ENCODE measurements at regions of chr1 and their contacts with region 1.

Region 1: DNA sequence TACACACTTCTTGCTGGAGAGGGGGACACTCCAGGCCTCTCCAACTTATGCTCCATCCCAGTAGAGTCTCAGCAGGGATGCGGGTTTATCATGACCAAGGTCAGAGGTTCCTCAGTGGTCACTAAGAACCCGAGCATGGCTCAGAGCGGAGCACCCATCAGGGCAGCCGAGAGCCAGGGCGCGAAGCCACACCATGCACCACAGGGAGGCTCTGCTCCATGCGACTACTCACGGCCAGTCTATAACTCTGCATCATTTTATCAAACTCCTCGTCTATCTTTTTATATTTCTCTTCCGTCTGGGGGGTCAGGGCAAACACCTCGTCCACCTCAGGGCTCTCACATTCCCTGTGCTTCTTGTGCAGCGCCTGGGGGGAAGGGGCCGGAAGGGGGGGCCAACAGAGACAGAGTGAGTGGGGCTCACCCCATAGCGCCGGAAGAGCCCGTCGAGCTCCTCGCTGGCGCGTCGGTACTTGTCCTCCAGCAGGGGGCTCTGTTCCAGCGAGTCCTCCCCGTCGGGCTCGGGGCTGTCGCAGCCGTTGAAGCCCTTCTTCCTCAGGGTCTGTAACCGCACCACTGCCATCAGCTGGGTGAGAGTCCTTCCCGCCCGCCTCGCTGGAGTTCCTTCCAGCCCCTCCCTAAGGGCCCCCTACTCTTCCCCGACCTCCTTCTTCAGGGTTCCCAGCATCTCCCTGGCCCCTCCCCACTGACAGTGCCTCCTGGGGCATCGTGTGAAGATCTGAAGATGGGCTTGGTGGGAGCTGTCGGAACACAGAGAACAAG is 20.0 kb downstream of the MEF2D start:
- DNase-seq: peak; percentile 88
- ATAC-seq: peak; percentile 89
- H3K4me3 Mint-ChIP-seq: peak overlapping the region; percentile 42
- H3K27ac Mint-ChIP-seq: peak overlapping the region; percentile 72
- H3K4me1 Mint-ChIP-seq: peaks cover 71% of the 10 kb centered on the region
- H3K27me3 Mint-ChIP-seq: no peaks in the 10 kb centered on the region

Region 2: GRCh38 chr1:156379420-156380165 is 101.0 kb before region 1 on chr1:
- CTCF ChIA-PET with region 1: no interaction called
- DNase-seq: no peak
- ATAC-seq: no peak
- H3K4me3 Mint-ChIP-seq: no peak overlapping the region
- H3K27ac Mint-ChIP-seq: no peak overlapping the region
- H3K4me1 Mint-ChIP-seq: peaks cover 2% of the 10 kb centered on the region
- H3K27me3 Mint-ChIP-seq: peaks cover 15% of the 10 kb centered on the region

Region 3: DNA sequence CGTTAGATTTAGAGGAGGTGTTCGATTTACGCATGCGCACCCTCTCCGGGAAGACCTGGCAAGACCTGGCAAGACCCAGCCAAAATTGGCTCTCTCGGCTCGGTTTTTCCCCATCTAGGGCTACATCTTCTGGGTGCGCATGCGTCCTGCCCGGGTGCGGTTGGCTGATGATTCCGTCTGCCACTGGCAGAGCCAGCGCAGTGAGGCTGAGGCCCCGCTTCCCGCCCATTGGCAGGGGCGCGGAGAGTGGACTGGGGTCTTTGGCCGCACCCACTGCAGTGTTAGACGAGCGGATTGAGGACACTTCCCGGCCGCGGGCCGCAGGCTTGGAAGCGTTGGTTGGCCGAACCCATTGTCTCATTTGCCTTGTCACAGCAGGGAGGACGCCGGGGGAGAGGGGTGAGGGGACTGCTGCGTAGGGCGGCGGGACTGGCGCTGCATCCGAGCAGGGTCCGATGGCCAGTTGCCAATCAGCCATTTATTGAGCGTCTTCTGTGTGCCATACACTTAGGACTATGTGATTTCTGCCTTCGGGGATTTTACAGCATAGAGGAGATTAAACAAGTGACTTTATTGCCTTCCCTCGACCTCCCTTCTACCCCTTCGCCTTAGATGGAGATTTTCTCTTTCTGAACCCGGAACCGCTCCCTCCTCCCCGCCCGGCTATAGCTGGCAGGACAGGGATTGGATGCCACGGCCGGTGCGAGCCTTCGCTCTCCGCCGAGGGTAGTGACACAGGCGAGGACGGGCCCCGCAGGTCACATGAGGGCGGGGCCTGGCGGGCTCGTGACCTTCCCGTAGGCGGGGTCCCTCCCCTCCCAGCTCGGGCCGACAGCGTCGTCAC is 23.8 kb before region 1 on chr1:
- CTCF ChIA-PET with region 1: interaction called, 18 read pairs
- DNase-seq: peak; percentile 97
- ATAC-seq: peak; percentile 92
- H3K4me3 Mint-ChIP-seq: peak overlapping the region; percentile 86
- H3K27ac Mint-ChIP-seq: peak overlapping the region; percentile 95
- H3K4me1 Mint-ChIP-seq: peaks cover 31% of the 10 kb centered on the region
- H3K27me3 Mint-ChIP-seq: peaks cover 7% of the 10 kb centered on the region

Region 4: DNA sequence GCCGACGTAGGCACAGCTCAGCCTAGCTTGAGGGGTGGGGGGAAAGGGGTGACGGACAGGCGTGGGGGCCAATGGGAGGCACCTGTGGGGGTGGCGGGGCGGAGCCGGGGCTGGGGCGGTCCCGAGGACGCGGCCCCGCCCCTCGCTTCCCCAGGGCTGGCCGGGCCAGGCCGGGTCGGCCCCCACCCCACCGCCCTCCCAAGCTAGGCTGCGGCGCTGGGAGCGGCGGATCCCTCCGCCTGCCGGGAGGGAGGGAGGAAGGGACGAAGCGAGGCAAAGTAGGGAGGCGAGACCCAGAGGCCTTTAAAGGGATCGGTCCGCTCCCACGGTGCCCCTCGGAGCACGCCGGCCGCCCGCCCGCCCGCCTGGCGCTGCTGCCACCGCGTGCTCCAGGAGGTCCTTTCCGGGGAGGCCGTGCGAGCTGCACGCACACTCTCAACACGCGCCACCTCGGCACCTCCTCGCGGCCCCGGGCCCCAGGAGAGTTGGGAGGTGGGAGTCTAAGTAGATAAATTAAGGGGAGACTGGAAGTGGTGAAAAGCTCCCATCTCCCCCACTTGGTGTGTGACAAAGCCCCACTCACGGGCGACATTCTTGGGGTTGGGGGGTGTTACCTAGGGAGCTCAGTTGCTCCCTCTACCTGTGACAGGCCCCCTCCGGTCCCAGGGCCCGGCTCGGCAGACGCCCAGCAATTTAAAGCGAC is 20.3 kb after region 1 on chr1:
- CTCF ChIA-PET with region 1: interaction called, 372 read pairs
- DNase-seq: peak; percentile 95
- ATAC-seq: peak; percentile 72
- H3K4me3 Mint-ChIP-seq: peak overlapping the region; percentile 88
- H3K27ac Mint-ChIP-seq: peak overlapping the region; percentile 97
- H3K4me1 Mint-ChIP-seq: peaks cover 74% of the 10 kb centered on the region
- H3K27me3 Mint-ChIP-seq: no peaks in the 10 kb centered on the region

Region 5: DNA sequence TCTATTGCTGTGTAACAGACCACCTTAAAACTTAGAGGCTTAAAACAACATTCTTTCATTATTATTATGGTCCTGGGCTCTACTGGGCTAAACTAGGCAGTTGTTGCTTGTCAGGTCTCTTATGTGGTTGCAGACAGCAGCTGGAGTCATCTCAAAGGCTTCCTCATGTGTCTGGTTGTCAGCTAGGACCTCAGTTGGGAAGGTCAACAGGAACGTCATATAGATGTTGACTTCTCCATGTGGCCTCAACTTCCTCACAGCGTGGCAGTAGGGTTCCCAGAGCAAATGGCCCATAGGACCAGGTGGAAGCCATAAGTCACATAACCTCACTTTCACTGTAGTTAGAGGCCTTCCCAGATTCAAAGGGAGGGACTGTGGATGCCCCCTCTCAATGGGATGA is 35.4 kb after region 1 on chr1:
- CTCF ChIA-PET with region 1: interaction called, 13 read pairs
- DNase-seq: no peak
- ATAC-seq: no peak
- H3K4me3 Mint-ChIP-seq: no peak overlapping the region
- H3K27ac Mint-ChIP-seq: no peak overlapping the region
- H3K4me1 Mint-ChIP-seq: peaks cover 17% of the 10 kb centered on the region
- H3K27me3 Mint-ChIP-seq: no peaks in the 10 kb centered on the region

Region 6: DNA sequence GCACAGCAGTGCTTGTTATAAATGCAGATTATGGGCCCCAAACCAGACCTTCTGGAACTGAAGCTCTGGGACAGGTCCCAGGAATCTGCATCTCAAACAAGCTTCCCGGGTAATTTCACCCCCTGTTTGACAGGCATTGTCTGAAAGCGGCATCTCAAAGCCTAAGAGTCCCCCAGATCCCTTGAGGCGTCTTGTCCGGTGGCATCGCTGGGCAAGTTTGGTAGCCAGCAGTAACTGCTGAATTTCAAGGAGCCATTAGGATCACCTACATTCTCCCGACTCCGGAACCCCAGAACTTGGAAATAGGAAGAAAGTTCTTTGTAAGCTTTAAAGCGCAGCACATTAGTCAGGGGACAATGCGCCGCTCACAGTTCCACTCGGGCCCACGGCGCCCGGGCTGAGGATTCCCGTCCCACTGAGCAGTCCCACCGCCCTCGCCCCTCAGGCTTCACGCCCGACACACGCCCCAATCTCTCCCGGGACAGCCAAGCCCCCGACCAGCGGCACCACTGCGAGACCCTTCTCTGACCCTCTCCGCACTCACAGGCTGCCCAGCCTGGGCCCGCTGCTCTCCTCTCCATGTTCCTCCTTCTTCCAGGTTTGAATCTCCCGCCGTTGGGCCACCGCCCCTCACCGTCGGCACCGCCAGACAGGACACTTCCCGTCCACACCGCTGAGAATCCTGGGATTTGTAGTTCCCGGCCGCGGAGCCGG is 91.5 kb after region 1 on chr1 and contains the start of gene IQGAP3:
- CTCF ChIA-PET with region 1: interaction called, 18 read pairs
- DNase-seq: peak; percentile 86
- ATAC-seq: peak; percentile 95
- H3K4me3 Mint-ChIP-seq: peak within 1 kb of the TSS; percentile 91
- H3K27ac Mint-ChIP-seq: peak within 1 kb of the TSS; percentile 58
- H3K4me1 Mint-ChIP-seq: peaks cover 26% of the 10 kb centered on the region
- H3K27me3 Mint-ChIP-seq: peaks cover 28% of the 10 kb centered on the region
- total RNA-seq, gene IQGAP3: 24.3 to 31.3 TPM

Region 7: DNA sequence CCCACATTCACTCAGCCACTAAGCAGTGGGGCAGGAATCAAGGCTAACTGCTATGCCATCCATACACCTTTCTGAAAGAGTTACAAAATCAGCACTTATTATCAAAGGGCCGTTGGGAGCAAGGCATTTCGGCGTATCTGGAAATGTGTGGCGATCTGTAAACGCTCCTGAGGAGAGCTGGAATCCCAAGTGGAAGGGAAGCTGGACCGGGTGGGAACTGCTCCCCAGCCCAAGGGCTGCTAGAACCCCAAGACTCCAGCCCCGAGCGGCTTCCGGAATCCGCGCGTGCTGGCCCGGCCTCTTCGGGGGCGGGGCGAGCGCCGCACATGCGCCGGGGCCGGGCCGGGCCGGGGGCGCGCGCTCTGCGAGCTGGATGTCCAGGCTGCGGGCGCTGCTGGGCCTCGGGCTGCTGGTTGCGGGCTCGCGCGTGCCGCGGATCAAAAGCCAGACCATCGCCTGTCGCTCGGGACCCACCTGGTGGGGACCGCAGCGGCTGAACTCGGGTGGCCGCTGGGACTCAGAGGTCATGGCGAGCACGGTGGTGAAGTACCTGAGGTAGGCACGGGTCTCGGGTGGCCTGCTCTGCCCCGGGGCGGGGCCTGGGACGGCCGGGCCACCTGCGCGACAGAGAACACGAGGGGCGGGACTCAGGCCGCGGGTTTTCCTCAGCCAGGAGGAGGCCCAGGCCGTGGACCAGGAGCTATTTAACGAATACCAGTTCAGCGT is 111.0 kb after region 1 on chr1 and contains the start of gene NAXE:
- CTCF ChIA-PET with region 1: interaction called, 17 read pairs
- DNase-seq: peak; percentile 77
- ATAC-seq: peak; percentile 98
- H3K4me3 Mint-ChIP-seq: peak within 1 kb of the TSS; percentile 83
- H3K27ac Mint-ChIP-seq: peak within 1 kb of the TSS; percentile 88
- H3K4me1 Mint-ChIP-seq: peaks cover 28% of the 10 kb centered on the region
- H3K27me3 Mint-ChIP-seq: no peaks in the 10 kb centered on the region
- total RNA-seq, gene NAXE: 62.7 to 66.6 TPM

Region 8: GRCh38 chr1:156608036-156608674 is 127.6 kb after region 1 on chr1:
- CTCF ChIA-PET with region 1: interaction called, 17 read pairs
- DNase-seq: peak; percentile 81
- ATAC-seq: peak; percentile 94
- H3K4me3 Mint-ChIP-seq: no peak overlapping the region
- H3K27ac Mint-ChIP-seq: no peak overlapping the region
- H3K4me1 Mint-ChIP-seq: peaks cover 11% of the 10 kb centered on the region
- H3K27me3 Mint-ChIP-seq: peaks cover 19% of the 10 kb centered on the region

Region 9: DNA sequence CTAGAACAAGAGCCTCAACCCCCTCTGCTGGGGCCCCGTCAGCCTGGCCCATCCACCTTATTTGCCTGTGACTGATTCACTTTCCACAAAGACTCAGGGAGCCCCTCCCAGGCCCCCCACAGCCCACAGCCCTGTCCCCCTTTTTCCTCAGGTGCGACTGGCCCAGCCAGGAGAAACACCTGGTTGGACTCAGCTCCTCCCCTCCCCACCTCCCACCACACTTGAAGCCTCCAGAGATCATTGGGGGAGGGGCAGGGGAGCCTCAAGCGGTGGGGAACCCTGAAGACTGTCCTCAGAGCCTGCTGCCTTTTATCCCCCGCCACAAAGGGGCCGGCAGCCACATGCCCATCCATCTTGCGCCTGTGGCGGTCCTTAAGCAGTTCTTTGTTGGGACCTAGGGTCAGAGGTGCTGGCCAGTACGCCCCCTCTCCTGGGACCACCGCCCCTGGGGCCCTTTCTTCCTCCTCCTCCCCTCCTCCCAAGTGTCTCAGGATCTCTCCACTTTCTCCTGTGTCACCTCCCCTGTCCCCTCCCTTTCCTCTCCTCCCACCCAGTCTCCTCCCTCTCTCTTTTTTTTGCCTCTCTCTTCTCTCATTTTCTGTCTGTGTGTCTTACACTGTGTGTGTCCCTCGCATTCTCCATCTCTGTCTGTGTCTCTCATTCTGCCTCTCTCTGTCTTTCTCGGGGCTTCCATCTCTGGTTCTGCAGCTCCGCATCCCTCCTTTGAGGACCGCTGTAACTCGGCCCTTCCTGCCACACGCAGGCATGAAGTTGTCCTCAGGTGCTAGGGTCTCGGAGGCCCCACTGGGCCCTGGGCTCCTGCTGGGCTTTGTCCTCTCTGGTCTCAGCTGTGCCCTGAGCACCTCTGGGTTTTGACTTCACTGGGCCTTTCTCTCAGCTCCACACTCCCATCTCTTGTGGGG is 212.6 kb after region 1 on chr1:
- CTCF ChIA-PET with region 1: no interaction called
- DNase-seq: no peak
- ATAC-seq: no peak
- H3K4me3 Mint-ChIP-seq: no peak overlapping the region
- H3K27ac Mint-ChIP-seq: no peak overlapping the region
- H3K4me1 Mint-ChIP-seq: peaks cover 20% of the 10 kb centered on the region
- H3K27me3 Mint-ChIP-seq: peaks cover 71% of the 10 kb centered on the region

Region 10: GRCh38 chr1:156936721-156937220 is 456.2 kb after region 1 on chr1:
- CTCF ChIA-PET with region 1: no interaction called
- DNase-seq: no peak
- ATAC-seq: no peak
- H3K4me3 Mint-ChIP-seq: no peak overlapping the region
- H3K27ac Mint-ChIP-seq: no peak overlapping the region
- H3K4me1 Mint-ChIP-seq: no peaks in the 10 kb centered on the region
- H3K27me3 Mint-ChIP-seq: peaks cover 27% of the 10 kb centered on the region

Measured in activated CD8-positive, alpha-beta memory T cell treated with anti-CD3 and anti-CD28 coated beads, Interleukin-2, amount 10 ng/mL, durations not matched to agents 7 days and 5 days (primary cell).